ENCODE measurements at regions of chr21 and their contacts with region 1.

Region 1: GRCh38 chr21:44949779-44950198 is 10.0 kb downstream of the SLX9 start:
- DNase-seq: peak; percentile 72 to 80 (median 75)
- H3K4me3 ChIP-seq: no peak overlapping the region
- H3K4me3 Mint-ChIP-seq: no peak overlapping the region
- H3K27ac ChIP-seq: no peak overlapping the region
- H3K27ac Mint-ChIP-seq: peak overlapping the region in 1 of 7 donors; percentile 52
- H3K4me1 ChIP-seq: peaks cover 9% of the 10 kb centered on the region
- H3K4me1 Mint-ChIP-seq: peaks cover 4 to 22% (median 11%) of the 10 kb centered on the region in 4 donors
- H3K27me3 ChIP-seq: no peaks in the 10 kb centered on the region
- H3K27me3 Mint-ChIP-seq: no peaks in the 10 kb centered on the region

Region 2: DNA sequence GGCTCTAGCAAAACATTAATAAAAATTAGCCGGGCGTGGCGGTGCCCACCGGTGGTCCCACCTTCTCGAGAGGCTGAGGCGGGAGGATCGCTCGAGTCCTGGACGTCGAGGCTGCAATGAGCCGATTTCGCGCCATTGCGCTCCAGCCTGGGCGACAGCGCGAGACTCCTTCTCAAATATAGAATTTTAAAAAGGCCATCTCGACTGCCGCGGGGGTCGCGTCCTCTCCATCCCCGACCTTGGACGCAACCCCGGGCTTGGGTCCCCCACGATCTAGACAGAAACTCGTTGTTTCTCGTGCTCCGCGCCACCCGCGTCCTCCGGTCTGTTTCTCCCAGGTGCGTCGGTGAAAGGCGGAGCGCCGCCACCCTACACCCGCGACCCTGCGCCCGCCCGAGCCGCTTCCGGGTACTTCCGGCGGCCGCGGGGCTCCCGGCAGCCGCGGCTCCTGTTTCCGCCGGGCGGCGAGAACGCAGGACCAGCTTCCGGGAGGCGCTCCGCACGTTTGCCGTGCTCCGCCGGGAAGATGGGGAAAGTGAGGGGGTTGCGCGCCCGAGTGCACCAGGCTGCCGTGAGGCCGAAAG is 10.2 kb before region 1 on chr21 and contains the start of gene SLX9:
- CTCF ChIA-PET with region 1: interaction called, 15 read pairs
- POLR2A ChIA-PET with region 1: interaction called, 3 read pairs
- intact Hi-C with region 1: no loop called
- DNase-seq: peak; percentile 69 to 82 (median 76)
- H3K4me3 ChIP-seq: peak within 1 kb of the TSS; percentile 36 to 57
- H3K4me3 Mint-ChIP-seq: peak within 1 kb of the TSS; percentile 86 to 97 (median 90)
- H3K27ac ChIP-seq: peak within 1 kb of the TSS; percentile 46
- H3K27ac Mint-ChIP-seq: peak within 1 kb of the TSS; percentile 53 to 96 (median 88)
- H3K4me1 ChIP-seq: peaks cover 38% of the 10 kb centered on the region
- H3K4me1 Mint-ChIP-seq: peaks cover 23 to 56% (median 40%) of the 10 kb centered on the region in 4 donors
- H3K27me3 ChIP-seq: no peaks in the 10 kb centered on the region
- H3K27me3 Mint-ChIP-seq: no peaks in the 10 kb centered on the region
- total RNA-seq, gene SLX9: 17.7 to 21.6 TPM

Region 3: GRCh38 chr21:45074048-45074817 is 124.4 kb after region 1 on chr21 and contains the start of gene ADARB1:
- CTCF ChIA-PET with region 1: interaction called, 12 read pairs
- POLR2A ChIA-PET with region 1: no interaction called
- intact Hi-C with region 1: no loop called
- DNase-seq: peak in 4 of 5 donors; percentile 65 to 79 (median 72)
- H3K4me3 ChIP-seq: peak within 1 kb of the TSS; percentile 18 to 52
- H3K4me3 Mint-ChIP-seq: peak within 1 kb of the TSS; percentile 92 to 99 (median 96)
- H3K27ac ChIP-seq: peak within 1 kb of the TSS; percentile 64
- H3K27ac Mint-ChIP-seq: peak within 1 kb of the TSS; percentile 92 to 99 (median 97)
- H3K4me1 ChIP-seq: peaks cover 44% of the 10 kb centered on the region
- H3K4me1 Mint-ChIP-seq: peaks cover 33 to 46% (median 39%) of the 10 kb centered on the region in 4 donors
- H3K27me3 ChIP-seq: no peaks in the 10 kb centered on the region
- H3K27me3 Mint-ChIP-seq: no peaks in the 10 kb centered on the region
- total RNA-seq, gene ADARB1: 49.7 to 50.0 TPM

Region 4: GRCh38 chr21:45102391-45102932 is 152.7 kb after region 1 on chr21:
- CTCF ChIA-PET with region 1: interaction called, 11 read pairs
- POLR2A ChIA-PET with region 1: no interaction called
- intact Hi-C with region 1: no loop called
- DNase-seq: no peak
- H3K4me3 ChIP-seq: no peak overlapping the region
- H3K4me3 Mint-ChIP-seq: peak overlapping the region in 3 of 8 donors; percentile 15 to 26 (median 25)
- H3K27ac ChIP-seq: no peak overlapping the region
- H3K27ac Mint-ChIP-seq: peak overlapping the region in 1 of 7 donors; percentile 43
- H3K4me1 ChIP-seq: peaks cover 43% of the 10 kb centered on the region
- H3K4me1 Mint-ChIP-seq: peaks cover 50 to 78% (median 63%) of the 10 kb centered on the region in 4 donors
- H3K27me3 ChIP-seq: no peaks in the 10 kb centered on the region
- H3K27me3 Mint-ChIP-seq: no peaks in the 10 kb centered on the region

Region 5: GRCh38 chr21:45439161-45439872 is 489.5 kb after region 1 on chr21:
- CTCF ChIA-PET with region 1: no interaction called
- POLR2A ChIA-PET with region 1: no interaction called
- intact Hi-C with region 1: loop called (anchors 1 kb)
- DNase-seq: peak; percentile 76 to 84 (median 81)
- H3K4me3 ChIP-seq: peak overlapping the region in 1 of 2 donors; percentile 44
- H3K4me3 Mint-ChIP-seq: peak overlapping the region; percentile 57 to 78 (median 74)
- H3K27ac ChIP-seq: peak overlapping the region; percentile 43
- H3K27ac Mint-ChIP-seq: peak overlapping the region in 6 of 7 donors; percentile 41 to 90 (median 78)
- H3K4me1 ChIP-seq: peaks cover 10% of the 10 kb centered on the region
- H3K4me1 Mint-ChIP-seq: peaks cover 2 to 12% (median 6%) of the 10 kb centered on the region in 4 donors
- H3K27me3 ChIP-seq: no peaks in the 10 kb centered on the region
- H3K27me3 Mint-ChIP-seq: peaks cover 1 to 7% of the 10 kb centered on the region in 2 donors

Measured in CD4-positive, alpha-beta memory T cell (primary cell).